ENCODE measurements at regions of chr22 and their contacts with region 1.

Region 1: GRCh38 chr22:42437488-42438292 is 5.5 kb upstream of the NFAM1 start:
- DNase-seq: peak; percentile 71 to 86
- ATAC-seq: peak; percentile 83 to 93 (median 88)
- H3K4me3 ChIP-seq: peak overlapping the region; percentile 44
- H3K27ac ChIP-seq: no peak overlapping the region
- H3K4me1 ChIP-seq: no peaks in the 10 kb centered on the region
- H3K27me3 ChIP-seq: peaks cover 0 to 69% (median 16%) of the 10 kb centered on the region in 3 donors
- CTCF ChIP-seq: peak; percentile 94

Region 2: DNA sequence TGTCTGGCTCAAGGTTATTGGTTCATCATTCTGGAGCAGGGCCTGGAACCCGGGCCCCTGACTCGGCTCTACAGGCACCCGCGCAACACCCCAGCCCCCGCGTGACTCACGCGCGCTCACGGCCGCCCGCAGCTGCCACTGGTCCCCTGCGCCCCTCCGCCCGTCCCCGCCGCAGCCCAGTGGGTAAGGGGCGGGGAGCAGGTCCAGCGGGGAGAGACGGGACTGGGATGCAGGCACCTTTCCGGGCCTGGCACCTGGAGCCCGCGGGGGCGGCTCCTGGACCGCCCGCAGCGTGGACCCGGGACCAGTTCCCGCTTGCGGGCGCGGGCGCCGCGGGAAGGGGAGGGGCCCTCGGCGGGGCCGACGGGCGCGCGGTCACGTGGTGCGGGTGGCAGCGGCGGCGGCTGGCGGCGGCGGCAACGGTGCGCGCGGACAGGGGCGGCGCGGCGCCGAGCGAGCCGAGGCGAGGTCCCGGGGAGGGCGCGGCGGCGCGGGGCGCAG is 461.2 kb before region 1 on chr22:
- intact Hi-C with region 1: loop called in 1 of 2 experiments (anchors 10 kb)
- DNase-seq: peak in 1 of 2 donors; percentile 66
- ATAC-seq: peak; percentile 45 to 90 (median 78)
- H3K4me3 ChIP-seq: peak overlapping the region; percentile 65
- H3K27ac ChIP-seq: no peak overlapping the region
- H3K4me1 ChIP-seq: no peaks in the 10 kb centered on the region
- H3K27me3 ChIP-seq: peaks cover 0 to 55% (median 2%) of the 10 kb centered on the region in 3 donors
- CTCF ChIP-seq: no peak

Region 3: DNA sequence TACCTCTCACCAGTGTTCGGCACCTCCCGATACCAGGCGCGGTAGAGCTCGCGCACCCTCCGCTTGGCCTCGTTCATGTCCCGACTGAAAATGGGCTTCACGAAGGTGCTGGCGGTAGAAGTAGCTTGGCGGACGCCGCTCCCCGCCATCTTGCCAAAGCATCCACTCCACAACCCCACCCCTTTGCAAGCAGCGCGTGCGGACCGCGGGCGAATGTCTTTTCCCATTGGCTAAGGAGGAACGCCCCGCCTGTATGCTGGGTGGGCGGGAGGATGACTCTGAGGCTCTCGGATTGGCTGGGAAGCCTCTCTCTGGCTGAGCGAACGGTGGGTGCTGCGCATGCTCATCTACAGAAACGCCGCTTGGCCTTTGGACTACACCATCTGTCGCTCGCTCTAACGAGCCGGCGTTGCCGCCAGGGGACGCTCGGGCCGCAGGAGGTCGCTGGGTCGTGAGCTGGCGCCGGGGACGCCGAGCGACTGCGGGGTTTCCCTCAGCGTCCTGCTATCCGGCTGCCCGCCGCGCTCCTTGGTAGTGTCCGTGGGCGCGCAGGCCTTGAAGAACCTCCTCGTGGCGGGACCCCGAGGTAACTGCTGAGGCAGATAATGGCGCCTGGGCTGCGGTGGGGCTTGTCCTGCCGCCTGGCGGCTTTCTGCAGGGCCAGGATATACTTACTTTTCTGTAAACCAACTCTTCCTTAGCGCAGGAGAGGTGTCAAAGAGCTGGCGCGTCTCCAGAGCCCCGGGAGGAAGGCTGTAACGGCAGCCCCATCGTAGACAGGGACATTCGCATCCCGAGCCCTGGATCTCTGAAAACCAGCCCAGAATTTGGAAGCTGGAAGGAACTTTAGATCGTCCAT is 346.9 kb before region 1 on chr22 and contains the start of gene NDUFA6:
- intact Hi-C with region 1: loop called (anchors 2 to 5 kb)
- DNase-seq: peak; percentile 99
- ATAC-seq: peak; percentile 92 to 96 (median 95)
- H3K4me3 ChIP-seq: peak within 1 kb of the TSS; percentile 93
- H3K27ac ChIP-seq: peak within 1 kb of the TSS; percentile 98
- H3K4me1 ChIP-seq: peaks cover 23% of the 10 kb centered on the region
- H3K27me3 ChIP-seq: no peaks in the 10 kb centered on the region
- CTCF ChIP-seq: peak; percentile 93
- total RNA-seq, gene NDUFA6: 149 to 181 (median 160) TPM

Region 4: GRCh38 chr22:42169055-42169469 is 268.6 kb before region 1 on chr22:
- intact Hi-C with region 1: loop called (anchors 1 to 2 kb)
- DNase-seq: peak; percentile 55 to 80
- ATAC-seq: peak; percentile 71 to 89 (median 80)
- H3K4me3 ChIP-seq: no peak overlapping the region
- H3K27ac ChIP-seq: no peak overlapping the region
- H3K4me1 ChIP-seq: no peaks in the 10 kb centered on the region
- H3K27me3 ChIP-seq: no peaks in the 10 kb centered on the region
- CTCF ChIP-seq: peak; percentile 83

Region 5: GRCh38 chr22:42270512-42271417 is 166.9 kb before region 1 on chr22 and contains the start of gene TCF20:
- intact Hi-C with region 1: loop called in 1 of 2 experiments (anchors 5 kb)
- DNase-seq: peak; percentile 83 to 88
- ATAC-seq: peak; percentile 73 to 85 (median 82)
- H3K4me3 ChIP-seq: peak within 1 kb of the TSS; percentile 97
- H3K27ac ChIP-seq: peak within 1 kb of the TSS; percentile 77
- H3K4me1 ChIP-seq: peaks cover 8% of the 10 kb centered on the region
- H3K27me3 ChIP-seq: no peaks in the 10 kb centered on the region
- CTCF ChIP-seq: no peak
- total RNA-seq, gene TCF20: 10.1 to 14.9 (median 12.1) TPM

Region 6: DNA sequence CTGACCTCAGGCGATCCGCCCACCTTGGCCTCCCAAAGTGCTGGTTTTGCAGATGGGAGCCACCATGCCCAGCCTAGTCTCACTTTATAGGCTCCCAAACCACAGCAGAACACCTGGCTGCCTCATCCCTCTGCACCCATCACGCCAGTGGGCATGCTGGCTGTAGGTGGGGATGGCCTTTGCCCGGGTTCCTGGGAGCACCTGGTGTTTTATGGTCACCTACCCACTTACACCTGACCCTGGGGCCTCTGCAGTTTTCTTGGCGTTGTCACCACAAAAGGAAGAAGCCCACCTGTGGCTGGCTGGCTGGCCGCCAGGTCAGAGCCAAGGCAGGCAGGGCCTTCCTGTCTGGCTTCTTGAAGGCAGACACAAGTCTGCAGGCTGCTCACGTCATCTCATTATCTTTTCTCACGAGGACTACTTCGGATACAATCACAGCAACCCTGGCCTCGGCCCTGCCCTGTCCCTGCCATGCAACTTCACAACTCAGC is 73.8 kb after region 1 on chr22:
- intact Hi-C with region 1: no loop called
- DNase-seq: no peak
- ATAC-seq: no peak
- H3K4me3 ChIP-seq: no peak overlapping the region
- H3K27ac ChIP-seq: no peak overlapping the region
- H3K4me1 ChIP-seq: no peaks in the 10 kb centered on the region
- H3K27me3 ChIP-seq: no peaks in the 10 kb centered on the region
- CTCF ChIP-seq: no peak

Region 7: GRCh38 chr22:42930810-42931420 is 493.2 kb after region 1 on chr22:
- intact Hi-C with region 1: no loop called
- DNase-seq: peak; percentile 39 to 74
- ATAC-seq: peak; percentile 56 to 77 (median 71)
- H3K4me3 ChIP-seq: no peak overlapping the region
- H3K27ac ChIP-seq: peak overlapping the region; percentile 77
- H3K4me1 ChIP-seq: peaks cover 90% of the 10 kb centered on the region
- H3K27me3 ChIP-seq: no peaks in the 10 kb centered on the region
- CTCF ChIP-seq: peak; percentile 10

Measured in psoas muscle (tissue), 8 donors.